CD8-positive, alpha-beta T cell (primary cell): ENCODE measurements at regions of chr1 and their contacts with region 1.

Region 1: DNA sequence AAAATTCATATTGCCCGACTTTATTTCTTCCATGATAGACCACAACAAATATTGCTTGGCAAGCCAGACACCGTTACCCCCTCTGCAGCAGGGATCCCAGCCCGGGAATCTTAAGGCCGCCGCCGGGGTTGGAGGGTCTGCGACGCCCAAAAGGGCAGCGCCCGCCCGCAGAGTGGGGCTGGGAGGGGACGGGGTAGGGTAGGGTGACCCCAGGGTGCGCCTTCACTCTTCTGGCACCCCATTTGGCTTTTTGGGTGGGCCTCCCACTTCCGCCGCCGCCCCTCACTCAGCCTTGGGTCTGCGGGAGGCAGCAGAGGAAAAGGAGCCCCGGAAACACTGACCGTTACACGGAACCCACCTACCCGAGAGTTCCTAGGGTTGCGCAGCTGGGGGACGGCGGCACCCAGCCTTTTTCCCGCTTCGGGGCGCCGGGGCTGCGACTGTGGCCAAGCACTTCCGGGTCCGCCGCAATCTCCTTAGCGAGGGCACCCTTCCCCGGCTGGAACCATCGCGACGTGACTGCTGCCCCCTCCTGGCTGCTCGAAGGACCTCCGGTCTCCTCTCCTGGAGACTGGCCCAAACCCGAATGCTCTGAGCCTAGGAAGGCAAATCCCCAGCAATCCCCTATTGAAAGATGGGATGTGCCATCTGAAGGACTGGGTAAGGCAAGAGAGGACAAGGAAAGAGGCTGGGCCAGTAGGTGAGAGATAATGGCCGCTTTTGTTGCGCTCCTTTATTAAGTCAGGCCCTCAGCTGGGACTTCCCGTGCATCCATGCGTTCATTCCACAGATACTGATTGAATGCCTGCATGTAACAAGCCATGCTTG is at the start of gene PIGC:
- DNase-seq: peak; percentile 83 to 94 (median 93)
- ATAC-seq: peak; percentile 99
- H3K4me3 ChIP-seq: peak within 1 kb of the TSS; percentile 78 to 90
- H3K4me3 Mint-ChIP-seq: peak within 1 kb of the TSS; percentile 96
- H3K27ac ChIP-seq: peak within 1 kb of the TSS; percentile 71 to 83
- H3K27ac Mint-ChIP-seq: peak within 1 kb of the TSS; percentile 95
- H3K4me1 ChIP-seq: peaks cover 25% of the 10 kb centered on the region
- H3K4me1 Mint-ChIP-seq: peaks cover 45% of the 10 kb centered on the region
- H3K27me3 ChIP-seq: no peaks in the 10 kb centered on the region
- H3K27me3 Mint-ChIP-seq: no peaks in the 10 kb centered on the region
- CTCF ChIP-seq: peak; percentile 77
- total RNA-seq, gene PIGC: 22.1 to 23.2 TPM

Region 2: DNA sequence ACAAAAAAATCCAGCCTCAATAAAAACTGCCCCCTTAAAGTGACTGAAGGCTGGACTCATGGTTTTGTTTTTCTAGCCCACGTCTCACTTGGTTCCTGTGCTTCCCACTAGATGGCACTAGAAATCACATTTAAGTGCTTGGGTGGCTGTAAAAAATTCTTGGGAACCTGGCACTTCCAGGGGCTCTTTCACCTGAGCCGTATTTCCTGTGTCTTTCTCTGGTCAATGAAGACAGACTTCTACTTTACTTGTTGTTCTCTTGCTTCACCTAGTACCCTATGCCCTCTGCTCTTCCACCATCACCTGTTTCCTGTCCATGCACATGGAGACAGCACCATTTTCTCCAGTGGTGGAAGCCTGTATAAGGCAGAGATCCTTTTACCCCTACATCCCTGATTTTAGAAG is 642.4 kb before region 1 on chr1:
- CTCF ChIA-PET with region 1: interaction called, 6 read pairs
- POLR2A ChIA-PET with region 1: no interaction called
- intact Hi-C with region 1: loop called in 1 of 2 experiments (anchors 5 kb)
- DNase-seq: peak in 2 of 9 experiments; percentile 43 to 52
- ATAC-seq: no peak
- H3K4me3 ChIP-seq: no peak overlapping the region
- H3K4me3 Mint-ChIP-seq: no peak overlapping the region
- H3K27ac ChIP-seq: no peak overlapping the region
- H3K27ac Mint-ChIP-seq: no peak overlapping the region
- H3K4me1 ChIP-seq: no peaks in the 10 kb centered on the region
- H3K4me1 Mint-ChIP-seq: peaks cover 6% of the 10 kb centered on the region
- H3K27me3 ChIP-seq: no peaks in the 10 kb centered on the region
- H3K27me3 Mint-ChIP-seq: no peaks in the 10 kb centered on the region
- CTCF ChIP-seq: peak; percentile 66

Region 3: GRCh38 chr1:172002725-172003345 is 441.0 kb before region 1 on chr1:
- CTCF ChIA-PET with region 1: interaction called, 13 read pairs
- POLR2A ChIA-PET with region 1: interaction called, 5 read pairs
- intact Hi-C with region 1: loop called (anchors 1 to 2 kb)
- DNase-seq: peak in 4 of 9 experiments; percentile 9 to 66 (median 36)
- ATAC-seq: peak; percentile 44
- H3K4me3 ChIP-seq: no peak overlapping the region
- H3K4me3 Mint-ChIP-seq: no peak overlapping the region
- H3K27ac ChIP-seq: no peak overlapping the region
- H3K27ac Mint-ChIP-seq: no peak overlapping the region
- H3K4me1 ChIP-seq: no peaks in the 10 kb centered on the region
- H3K4me1 Mint-ChIP-seq: no peaks in the 10 kb centered on the region
- H3K27me3 ChIP-seq: no peaks in the 10 kb centered on the region
- H3K27me3 Mint-ChIP-seq: peaks cover under 1% of the 10 kb centered on the region
- CTCF ChIP-seq: peak; percentile 72

Region 4: GRCh38 chr1:172429331-172430127 is 14.3 kb before region 1 on chr1:
- CTCF ChIA-PET with region 1: interaction called, 111 read pairs
- POLR2A ChIA-PET with region 1: interaction called, 21 read pairs
- intact Hi-C with region 1: loop called (anchors 1 kb)
- DNase-seq: peak in 6 of 9 experiments; percentile 22 to 80 (median 47)
- ATAC-seq: peak; percentile 75
- H3K4me3 ChIP-seq: no peak overlapping the region
- H3K4me3 Mint-ChIP-seq: no peak overlapping the region
- H3K27ac ChIP-seq: no peak overlapping the region
- H3K27ac Mint-ChIP-seq: peak overlapping the region; percentile 7
- H3K4me1 ChIP-seq: peaks cover 51% of the 10 kb centered on the region
- H3K4me1 Mint-ChIP-seq: peaks cover 49% of the 10 kb centered on the region
- H3K27me3 ChIP-seq: no peaks in the 10 kb centered on the region
- H3K27me3 Mint-ChIP-seq: no peaks in the 10 kb centered on the region
- CTCF ChIP-seq: peak; percentile 82